Posterior cingulate gyrus (tissue), 11 donors: ENCODE measurements at regions of chr15 and their contacts with region 1.

Region 1: GRCh38 chr15:41401904-41402267 is 410 bp downstream of the NDUFAF1 start:
- DNase-seq: no peak

Region 2: DNA sequence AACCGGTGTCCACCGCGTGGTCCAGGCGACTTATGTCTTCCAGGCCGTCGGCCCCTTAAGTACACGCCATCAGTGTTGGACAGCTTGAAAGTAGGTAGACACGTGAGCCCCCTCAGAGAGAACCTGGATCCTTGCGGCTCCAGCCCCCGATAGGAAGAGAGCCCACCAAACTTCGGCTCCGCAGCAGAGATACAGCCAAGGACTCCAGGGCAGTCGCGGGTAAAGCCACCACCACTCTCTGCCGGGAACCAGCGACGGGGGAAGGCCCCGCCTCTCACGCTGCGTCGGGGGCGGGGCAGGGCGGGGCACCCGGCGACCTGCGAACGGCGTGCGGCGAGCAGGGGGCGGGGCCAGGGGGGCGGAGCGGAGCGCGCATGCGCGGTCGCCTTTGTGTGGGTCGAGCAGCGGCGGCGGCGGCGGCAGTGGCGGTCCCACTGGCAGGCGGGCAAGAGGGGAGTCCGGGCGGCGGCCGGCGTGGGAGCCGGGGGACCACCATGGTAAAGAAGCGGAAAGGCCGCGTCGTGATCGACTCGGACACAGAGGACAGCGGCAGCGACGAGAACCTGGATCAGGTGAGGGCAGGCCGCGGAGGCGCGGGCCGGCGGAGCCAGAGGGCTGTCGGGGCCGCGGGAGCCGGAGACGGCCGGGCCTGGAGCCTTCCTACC is 15.0 kb after region 1 on chr15 and contains the start of gene RTF1:
- intact Hi-C with region 1: loop called (anchors 2 kb)
- DNase-seq: peak; percentile 90 to 99 (median 94)